Activated CD4-positive, alpha-beta T cell treated with anti-CD3 and anti-CD28 coated beads, Interleukin-2, amount 10 ng/mL, durations not matched to agents 24 days and 14 days (primary cell): ENCODE measurements at regions of chr2 and their contacts with region 1.

Region 1: GRCh38 chr2:7427293-7428060 is 510.3 kb downstream of the RNF144A start:
- DNase-seq: peak; percentile 86
- H3K4me3 Mint-ChIP-seq: peak overlapping the region; percentile 27
- H3K27ac Mint-ChIP-seq: peak overlapping the region; percentile 83
- H3K4me1 Mint-ChIP-seq: peaks cover 42% of the 10 kb centered on the region
- H3K27me3 Mint-ChIP-seq: no peaks in the 10 kb centered on the region

Region 2: DNA sequence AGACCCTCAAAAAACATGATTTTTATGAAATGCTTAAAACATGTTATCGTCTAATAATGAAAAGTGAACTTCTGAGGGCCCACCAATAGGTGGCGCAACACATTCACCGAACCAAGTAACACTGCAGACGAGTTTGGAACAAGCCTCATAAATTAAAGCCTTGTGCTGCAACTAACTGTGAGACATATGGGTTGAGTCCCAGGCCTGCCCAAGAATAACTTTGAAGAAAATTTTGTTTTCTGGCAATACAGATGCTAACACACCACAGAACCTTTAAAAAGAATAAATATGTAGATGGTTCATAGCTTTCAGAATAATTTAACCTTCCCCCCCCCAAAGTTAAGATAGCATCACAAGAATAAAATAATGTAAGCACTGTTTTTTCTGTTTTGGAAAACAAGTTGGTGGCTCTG is 224.4 kb before region 1 on chr2:
- intact Hi-C with region 1: loop called (anchors 10 kb)
- DNase-seq: peak; percentile 88
- H3K4me3 Mint-ChIP-seq: no peak overlapping the region
- H3K27ac Mint-ChIP-seq: no peak overlapping the region
- H3K4me1 Mint-ChIP-seq: peaks cover 3% of the 10 kb centered on the region
- H3K27me3 Mint-ChIP-seq: peaks cover 2% of the 10 kb centered on the region

Region 3: DNA sequence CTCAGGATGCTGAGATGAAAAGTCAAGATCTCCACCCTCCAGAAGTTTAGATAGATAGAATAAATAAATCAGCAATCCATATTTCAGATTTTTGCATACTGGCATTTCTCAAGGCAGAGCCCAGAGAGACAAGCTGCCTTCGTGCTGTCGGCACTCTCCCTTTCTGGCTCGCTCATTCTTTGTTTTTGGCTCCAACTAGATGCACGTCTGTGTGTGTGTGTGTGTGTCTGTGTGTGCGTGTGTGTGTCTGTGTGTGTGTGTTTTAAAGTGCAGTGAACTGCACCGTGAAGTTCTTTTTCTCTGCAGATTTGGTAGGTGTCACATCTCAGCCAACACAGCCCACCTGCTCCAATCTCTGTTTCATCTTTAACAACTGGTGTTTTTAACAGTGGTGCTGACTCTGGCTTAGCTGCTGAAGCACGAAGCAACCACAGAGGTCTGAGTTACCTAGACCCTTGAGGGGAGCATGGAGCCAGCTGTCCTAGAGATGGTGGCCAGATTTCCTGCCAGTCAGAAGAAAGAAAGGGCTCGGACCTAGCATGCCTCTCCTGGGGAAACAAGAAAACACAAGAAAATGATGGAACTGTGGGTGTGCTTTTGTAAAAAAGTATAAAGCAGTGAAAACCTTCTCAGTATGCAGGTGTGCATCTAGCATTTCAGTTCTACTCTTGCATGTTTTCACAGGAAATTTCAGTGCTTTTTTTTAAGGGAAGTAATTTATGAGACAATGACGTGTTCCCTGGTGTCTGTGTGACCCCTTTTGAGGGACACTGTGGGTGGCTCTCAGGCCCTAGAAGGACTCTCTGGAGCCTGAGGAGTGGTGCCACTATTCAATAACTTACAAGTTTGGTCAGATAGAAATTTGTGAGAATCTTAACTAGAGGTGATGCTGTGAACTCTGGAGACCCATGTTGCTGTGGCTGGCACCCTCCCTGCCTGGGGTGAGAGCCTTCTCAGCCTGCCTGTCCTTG is 146.0 kb before region 1 on chr2:
- intact Hi-C with region 1: no loop called
- DNase-seq: no peak
- H3K4me3 Mint-ChIP-seq: no peak overlapping the region
- H3K27ac Mint-ChIP-seq: no peak overlapping the region
- H3K4me1 Mint-ChIP-seq: no peaks in the 10 kb centered on the region
- H3K27me3 Mint-ChIP-seq: no peaks in the 10 kb centered on the region

Region 4: DNA sequence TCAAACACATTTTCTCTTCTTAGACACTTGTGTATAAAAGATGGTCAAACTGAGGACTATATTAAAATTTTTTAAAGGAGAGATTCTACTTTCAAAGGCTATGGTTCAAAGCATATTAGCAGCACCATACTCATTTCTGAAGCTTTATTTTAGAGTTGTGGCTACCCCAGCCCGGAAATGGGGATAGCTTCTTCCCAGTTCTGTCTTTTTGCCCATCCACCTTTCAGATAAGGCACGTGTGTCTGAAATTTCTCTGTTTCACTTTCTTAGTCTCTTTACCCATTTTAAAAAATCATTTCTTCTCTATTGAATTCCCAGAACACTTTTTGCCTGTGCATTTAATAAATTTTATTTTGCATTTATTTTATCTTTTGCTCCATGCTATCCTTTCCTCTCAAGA is 78.7 kb before region 1 on chr2:
- intact Hi-C with region 1: no loop called
- DNase-seq: no peak
- H3K4me3 Mint-ChIP-seq: no peak overlapping the region
- H3K27ac Mint-ChIP-seq: no peak overlapping the region
- H3K4me1 Mint-ChIP-seq: no peaks in the 10 kb centered on the region
- H3K27me3 Mint-ChIP-seq: peaks cover 3% of the 10 kb centered on the region

Region 5: GRCh38 chr2:7394195-7394594 is 33.3 kb before region 1 on chr2:
- intact Hi-C with region 1: no loop called
- DNase-seq: no peak
- H3K4me3 Mint-ChIP-seq: no peak overlapping the region
- H3K27ac Mint-ChIP-seq: no peak overlapping the region
- H3K4me1 Mint-ChIP-seq: no peaks in the 10 kb centered on the region
- H3K27me3 Mint-ChIP-seq: peaks cover 11% of the 10 kb centered on the region

Region 6: GRCh38 chr2:7567646-7568045 is 140.2 kb after region 1 on chr2:
- intact Hi-C with region 1: loop called (anchors 1 kb)
- DNase-seq: peak; percentile 89
- H3K4me3 Mint-ChIP-seq: peak overlapping the region; percentile 65
- H3K27ac Mint-ChIP-seq: peak overlapping the region; percentile 97
- H3K4me1 Mint-ChIP-seq: peaks cover 58% of the 10 kb centered on the region
- H3K27me3 Mint-ChIP-seq: no peaks in the 10 kb centered on the region

Region 7: DNA sequence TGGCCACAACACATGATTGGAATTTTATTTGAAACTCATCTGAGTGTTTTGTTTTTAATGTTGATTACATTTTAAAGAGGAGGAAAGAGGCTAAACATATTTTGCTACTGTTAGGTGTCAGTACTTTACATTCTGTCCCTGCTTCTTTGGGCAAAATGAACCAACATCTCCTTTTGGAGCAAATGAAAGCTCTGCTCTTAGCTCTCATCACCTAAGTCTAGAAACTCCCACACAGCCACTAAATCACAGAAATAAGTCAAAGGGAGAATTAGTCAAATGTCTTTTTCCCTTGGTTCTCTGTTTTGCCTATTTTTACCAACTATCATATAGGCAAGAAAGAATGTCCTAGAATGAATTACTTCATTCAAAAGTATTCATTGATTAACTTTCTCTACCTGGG is 156.5 kb after region 1 on chr2:
- intact Hi-C with region 1: no loop called
- DNase-seq: no peak
- H3K4me3 Mint-ChIP-seq: no peak overlapping the region
- H3K27ac Mint-ChIP-seq: peak overlapping the region; percentile 68
- H3K4me1 Mint-ChIP-seq: peaks cover 26% of the 10 kb centered on the region
- H3K27me3 Mint-ChIP-seq: no peaks in the 10 kb centered on the region

Region 8: GRCh38 chr2:7845332-7845731 is 417.9 kb after region 1 on chr2:
- intact Hi-C with region 1: loop called (anchors 5 kb)
- DNase-seq: peak; percentile 52
- H3K4me3 Mint-ChIP-seq: no peak overlapping the region
- H3K27ac Mint-ChIP-seq: peak overlapping the region; percentile 76
- H3K4me1 Mint-ChIP-seq: peaks cover 42% of the 10 kb centered on the region
- H3K27me3 Mint-ChIP-seq: no peaks in the 10 kb centered on the region

Region 9: DNA sequence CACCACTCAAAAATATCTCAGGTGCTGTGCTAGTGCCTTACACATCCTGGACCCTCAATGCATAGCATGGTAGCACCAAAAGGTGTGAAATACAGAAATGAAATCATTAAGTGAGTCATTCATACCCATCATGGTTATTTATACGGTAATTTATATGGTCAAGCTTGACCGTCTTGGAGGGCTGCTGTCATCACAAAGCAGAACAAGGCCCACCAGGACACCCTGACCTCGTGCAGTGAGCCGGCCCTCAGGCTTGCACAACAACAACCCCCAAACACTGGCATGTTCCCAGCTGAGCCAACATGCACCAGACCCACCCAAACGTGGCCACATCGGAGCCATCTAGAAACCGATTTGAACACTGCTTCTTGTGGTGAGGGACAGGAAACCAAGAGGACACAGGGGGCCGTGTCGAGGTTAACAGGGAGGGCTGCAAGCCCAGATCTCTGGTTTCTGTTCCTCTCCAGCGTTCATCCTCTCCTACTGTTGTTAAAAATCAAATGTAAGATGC is 875.9 kb after region 1 on chr2:
- intact Hi-C with region 1: loop called (anchors 10 kb)
- DNase-seq: peak; percentile 94
- H3K4me3 Mint-ChIP-seq: peak overlapping the region; percentile 71
- H3K27ac Mint-ChIP-seq: peak overlapping the region; percentile 83
- H3K4me1 Mint-ChIP-seq: peaks cover 72% of the 10 kb centered on the region
- H3K27me3 Mint-ChIP-seq: no peaks in the 10 kb centered on the region

Region 10: GRCh38 chr2:8514796-8515758 is 1087.6 kb after region 1 on chr2:
- intact Hi-C with region 1: loop called (anchors 10 kb)
- DNase-seq: peak; percentile 87
- H3K4me3 Mint-ChIP-seq: peak overlapping the region; percentile 58
- H3K27ac Mint-ChIP-seq: peak overlapping the region; percentile 96
- H3K4me1 Mint-ChIP-seq: peaks cover 63% of the 10 kb centered on the region
- H3K27me3 Mint-ChIP-seq: no peaks in the 10 kb centered on the region